Dorsolateral prefrontal cortex (tissue), 120 donors: ENCODE measurements at regions of chr14 and their contacts with region 1.

Region 1: GRCh38 chr14:39683691-39684090 is 251.5 kb upstream of the FBXO33 start:
- DNase-seq: no peak
- H3K4me3 ChIP-seq: no peak overlapping the region
- H3K27ac ChIP-seq: peak overlapping the region in 3 of 59 donors; percentile 8 to 13 (median 12)
- H3K27me3 ChIP-seq: no peaks in the 10 kb centered on the region
- CTCF ChIP-seq: no peak

Region 2: GRCh38 chr14:39665075-39665475 is 18.6 kb before region 1 on chr14:
- intact Hi-C with region 1: loop called in 1 of 2 experiments (anchors 1 kb)
- DNase-seq: peak in 1 of 10 donors; percentile 18
- H3K4me3 ChIP-seq: no peak overlapping the region
- H3K27ac ChIP-seq: peak overlapping the region in 44 of 59 donors; percentile 0 to 79 (median 45)
- H3K27me3 ChIP-seq: no peaks in the 10 kb centered on the region
- CTCF ChIP-seq: no peak

Region 3: DNA sequence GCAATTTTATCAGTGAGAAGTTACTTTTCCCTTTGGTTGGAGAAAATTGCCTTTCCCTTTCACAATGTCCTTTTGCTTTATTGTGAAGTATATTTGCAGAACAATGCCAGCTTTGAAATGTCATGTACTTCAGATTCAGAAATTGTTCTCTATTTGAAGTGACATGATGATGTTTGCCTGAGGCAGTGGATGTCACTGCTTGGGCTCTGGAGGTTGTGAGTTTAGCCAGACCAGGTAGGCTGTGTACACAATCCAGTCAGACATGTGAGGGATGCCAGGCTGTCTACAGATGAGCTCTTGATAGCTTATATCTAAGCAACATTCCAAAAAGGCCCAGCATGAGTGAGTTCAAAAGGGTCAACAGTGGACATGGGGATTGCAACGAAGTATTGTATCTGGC is 200.4 kb after region 1 on chr14:
- intact Hi-C with region 1: no loop called
- DNase-seq: no peak
- H3K4me3 ChIP-seq: no peak overlapping the region
- H3K27ac ChIP-seq: no peak overlapping the region
- H3K27me3 ChIP-seq: no peaks in the 10 kb centered on the region
- CTCF ChIP-seq: no peak